ENCODE measurements at regions of chr18 and their contacts with region 1.

Region 1: GRCh38 chr18:46173393-46174341 is 69.5 kb downstream of the HAUS1 start:
- DNase-seq: peak; percentile 96
- ATAC-seq: peak; percentile 91
- H3K4me3 Mint-ChIP-seq: peak overlapping the region; percentile 94
- H3K27ac Mint-ChIP-seq: peak overlapping the region; percentile 99
- H3K4me1 Mint-ChIP-seq: peaks cover 46% of the 10 kb centered on the region
- H3K27me3 Mint-ChIP-seq: peaks cover 3% of the 10 kb centered on the region

Region 2: GRCh38 chr18:46073474-46074331 is 100.0 kb before region 1 on chr18:
- CTCF ChIA-PET with region 1: no interaction called
- DNase-seq: peak; percentile 59
- ATAC-seq: peak; percentile 58
- H3K4me3 Mint-ChIP-seq: no peak overlapping the region
- H3K27ac Mint-ChIP-seq: peak overlapping the region; percentile 33
- H3K4me1 Mint-ChIP-seq: peaks cover 29% of the 10 kb centered on the region
- H3K27me3 Mint-ChIP-seq: peaks cover 6% of the 10 kb centered on the region

Region 3: DNA sequence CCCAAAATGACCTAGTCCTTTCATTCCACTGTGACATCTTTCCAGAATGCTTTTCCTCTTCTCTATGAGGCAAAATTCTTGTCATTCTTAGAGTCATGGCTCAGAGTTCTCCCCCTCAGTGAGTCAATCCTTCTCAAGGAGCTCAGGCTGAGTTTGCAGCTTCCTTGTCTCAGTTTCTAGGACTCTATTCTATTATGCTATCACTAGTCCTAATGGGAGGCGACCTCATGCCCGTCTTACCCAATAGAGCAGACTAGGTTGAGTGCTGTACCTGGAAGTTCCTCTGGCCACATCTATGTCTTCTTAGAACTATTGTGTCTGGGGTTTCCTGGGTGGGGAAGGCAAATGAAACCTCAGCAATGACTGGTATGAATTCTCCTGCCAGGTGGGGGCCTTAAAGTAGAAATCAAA is 18.0 kb before region 1 on chr18:
- CTCF ChIA-PET with region 1: interaction called, 115 read pairs
- DNase-seq: peak; percentile 87
- ATAC-seq: peak; percentile 92
- H3K4me3 Mint-ChIP-seq: peak overlapping the region; percentile 62
- H3K27ac Mint-ChIP-seq: peak overlapping the region; percentile 96
- H3K4me1 Mint-ChIP-seq: peaks cover 53% of the 10 kb centered on the region
- H3K27me3 Mint-ChIP-seq: peaks cover 41% of the 10 kb centered on the region

Region 4: GRCh38 chr18:46220116-46220515 is 46.4 kb after region 1 on chr18:
- CTCF ChIA-PET with region 1: interaction called, 35 read pairs
- DNase-seq: no peak
- ATAC-seq: no peak
- H3K4me3 Mint-ChIP-seq: no peak overlapping the region
- H3K27ac Mint-ChIP-seq: no peak overlapping the region
- H3K4me1 Mint-ChIP-seq: peaks cover 50% of the 10 kb centered on the region
- H3K27me3 Mint-ChIP-seq: no peaks in the 10 kb centered on the region

Region 5: DNA sequence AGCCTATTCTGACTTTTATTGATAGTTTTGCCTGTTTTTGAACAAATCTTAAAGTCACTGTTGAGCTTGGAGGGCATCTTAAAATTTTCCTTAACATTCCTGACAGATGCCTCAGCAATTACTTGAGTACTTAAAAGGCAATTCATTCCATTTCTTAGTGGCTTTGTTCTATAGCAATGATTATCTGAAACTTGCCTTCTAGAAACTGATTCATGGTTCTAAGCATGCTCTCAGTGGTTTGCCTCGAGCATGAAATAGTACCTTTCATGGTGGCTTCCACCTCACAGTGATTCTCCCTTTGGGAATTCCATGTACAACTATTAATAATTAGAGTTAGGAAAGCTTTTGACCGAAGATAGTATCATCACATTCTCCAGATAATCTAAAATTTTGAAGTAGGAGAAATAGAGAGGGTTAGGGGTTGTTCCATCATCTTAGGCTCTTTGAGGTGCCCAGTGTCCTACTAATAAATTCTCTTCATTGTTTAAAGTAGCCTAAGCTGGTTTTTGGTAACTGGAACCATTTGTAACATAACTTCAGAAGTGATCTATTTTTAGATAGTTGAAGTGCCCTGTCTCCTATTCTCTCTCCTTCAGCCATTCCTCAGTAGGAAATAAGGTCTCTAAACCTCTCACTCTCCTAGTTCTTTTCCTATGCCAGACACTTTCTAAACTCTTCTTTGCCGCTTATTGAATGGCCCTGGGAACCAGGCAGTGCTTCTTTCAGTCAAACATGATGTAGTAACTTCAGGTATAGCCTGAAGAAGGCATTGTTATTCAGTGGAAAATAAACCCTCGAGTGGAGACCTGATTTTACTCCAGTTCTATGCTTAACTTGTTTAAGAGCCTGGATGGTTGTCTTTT is 86.6 kb after region 1 on chr18:
- CTCF ChIA-PET with region 1: interaction called, 12 read pairs
- DNase-seq: no peak
- ATAC-seq: no peak
- H3K4me3 Mint-ChIP-seq: no peak overlapping the region
- H3K27ac Mint-ChIP-seq: no peak overlapping the region
- H3K4me1 Mint-ChIP-seq: peaks cover 31% of the 10 kb centered on the region
- H3K27me3 Mint-ChIP-seq: no peaks in the 10 kb centered on the region

Region 6: DNA sequence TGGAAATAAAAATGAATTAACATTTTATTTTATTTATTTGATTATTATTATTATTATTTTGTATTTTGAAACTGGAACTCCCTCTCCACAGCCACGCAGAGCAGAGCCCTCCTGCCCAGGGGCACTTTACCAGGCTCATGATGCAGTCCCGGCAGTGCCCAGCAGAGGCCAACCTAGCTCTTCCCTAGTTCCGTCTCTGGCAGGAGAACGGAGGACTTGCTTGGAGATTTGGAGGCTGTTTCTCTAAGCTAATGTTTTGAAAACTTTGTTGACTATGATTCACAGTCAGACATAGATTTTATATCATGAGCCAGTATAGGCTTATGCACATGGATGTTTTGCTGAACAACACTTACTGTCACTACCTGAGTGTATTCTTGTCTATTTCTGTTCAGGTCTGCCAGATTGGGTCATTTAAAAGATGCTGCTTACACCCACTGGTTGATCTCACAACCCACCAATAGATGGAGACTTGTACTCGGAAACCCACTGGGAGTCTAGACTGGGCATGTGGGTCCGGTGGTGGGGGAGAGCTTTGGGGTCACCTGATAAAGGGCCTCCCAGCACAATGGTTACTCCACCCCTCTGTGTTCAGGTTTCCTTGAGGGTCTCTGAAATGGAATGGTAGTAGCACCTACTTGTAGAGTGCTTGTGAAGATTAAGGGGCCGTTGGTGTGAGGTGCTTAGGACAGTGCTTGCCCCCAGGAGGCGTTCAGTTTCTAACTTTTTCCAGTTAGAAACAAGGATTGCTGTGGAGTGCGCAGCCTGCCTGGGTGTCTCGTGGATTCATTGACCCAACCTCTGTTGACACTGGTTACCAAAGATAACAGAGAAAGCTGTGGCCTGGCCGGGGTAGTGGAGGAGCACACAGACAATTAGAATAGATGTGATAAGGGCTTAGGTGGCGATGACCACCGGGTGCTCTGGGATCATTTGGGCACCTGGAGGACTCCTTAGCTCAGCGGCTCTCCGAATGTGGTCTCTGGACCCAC is 107.8 kb after region 1 on chr18:
- CTCF ChIA-PET with region 1: interaction called, 20 read pairs
- DNase-seq: peak; percentile 72
- ATAC-seq: peak; percentile 90
- H3K4me3 Mint-ChIP-seq: no peak overlapping the region
- H3K27ac Mint-ChIP-seq: no peak overlapping the region
- H3K4me1 Mint-ChIP-seq: peaks cover 10% of the 10 kb centered on the region
- H3K27me3 Mint-ChIP-seq: no peaks in the 10 kb centered on the region

Region 7: GRCh38 chr18:46660955-46661749 is 487.5 kb after region 1 on chr18:
- CTCF ChIA-PET with region 1: interaction called, 47 read pairs
- DNase-seq: no peak
- ATAC-seq: no peak
- H3K4me3 Mint-ChIP-seq: no peak overlapping the region
- H3K27ac Mint-ChIP-seq: no peak overlapping the region
- H3K4me1 Mint-ChIP-seq: no peaks in the 10 kb centered on the region
- H3K27me3 Mint-ChIP-seq: peaks cover 8% of the 10 kb centered on the region